ENCODE measurements at regions of chr19 and their contacts with region 1.

Region 1: GRCh38 chr19:40750059-40750873 is at the start of gene ACTMAP:
- DNase-seq: peak; percentile 98 to 100 (median 99)
- ATAC-seq: peak; percentile 88
- H3K4me3 ChIP-seq: peak within 1 kb of the TSS; percentile 93
- H3K4me3 Mint-ChIP-seq: peak within 1 kb of the TSS; percentile 99
- H3K27ac ChIP-seq: peak within 1 kb of the TSS; percentile 84 to 93
- H3K27ac Mint-ChIP-seq: peak within 1 kb of the TSS; percentile 99
- H3K4me1 ChIP-seq: peaks cover 56% of the 10 kb centered on the region
- H3K4me1 Mint-ChIP-seq: peaks cover 47% of the 10 kb centered on the region
- H3K27me3 ChIP-seq: no peaks in the 10 kb centered on the region
- H3K27me3 Mint-ChIP-seq: no peaks in the 10 kb centered on the region
- CTCF ChIP-seq: no peak
- total RNA-seq, gene ACTMAP: 3.9 to 5.7 TPM

Region 2: DNA sequence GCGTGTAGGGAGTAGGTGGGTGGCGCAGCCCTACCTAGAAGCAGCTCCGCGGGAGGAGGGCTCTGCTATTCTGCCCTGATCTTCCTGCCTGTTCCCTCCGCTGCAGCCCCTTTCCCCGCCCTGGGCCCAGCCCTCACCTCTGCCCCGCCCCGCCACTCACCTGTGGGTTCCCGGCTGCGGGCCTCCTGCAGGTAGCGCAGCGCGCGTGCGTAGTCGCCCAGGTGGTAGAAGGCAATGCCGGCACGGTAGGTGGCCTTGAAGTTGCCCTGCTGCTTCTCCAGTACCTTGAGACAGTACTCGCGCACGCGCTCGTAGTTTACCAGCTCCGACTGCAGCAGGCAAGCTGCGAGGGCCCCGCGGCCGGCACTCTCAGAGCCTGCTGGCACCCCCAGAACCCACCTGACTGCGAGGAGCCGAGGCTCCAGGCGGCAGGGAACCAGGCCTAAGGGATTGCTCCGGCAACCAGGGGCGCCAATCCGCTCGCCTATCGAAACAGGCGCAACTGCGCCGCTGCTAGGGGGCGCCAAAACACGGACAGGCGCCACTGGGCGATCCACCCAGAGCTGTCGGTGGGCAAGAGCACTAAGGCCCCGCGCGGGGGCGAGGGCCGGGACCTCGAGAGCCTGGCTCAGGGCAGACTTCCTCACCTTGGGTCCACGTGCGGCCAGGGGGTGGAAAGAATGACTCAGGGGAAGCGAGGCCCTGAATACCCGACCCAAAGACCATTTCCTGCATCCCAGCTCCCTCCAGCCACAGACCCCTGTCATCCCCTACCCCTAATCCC is 533.0 kb before region 1 on chr19:
- CTCF ChIA-PET with region 1: no interaction called
- POLR2A ChIA-PET with region 1: no interaction called
- intact Hi-C with region 1: no loop called
- DNase-seq: no peak
- ATAC-seq: no peak
- H3K4me3 ChIP-seq: no peak overlapping the region
- H3K4me3 Mint-ChIP-seq: no peak overlapping the region
- H3K27ac ChIP-seq: no peak overlapping the region
- H3K27ac Mint-ChIP-seq: no peak overlapping the region
- H3K4me1 ChIP-seq: peaks cover 14% of the 10 kb centered on the region
- H3K4me1 Mint-ChIP-seq: peaks cover 5% of the 10 kb centered on the region
- H3K27me3 ChIP-seq: peaks cover 33 to 38% of the 10 kb centered on the region in 2 experiments
- H3K27me3 Mint-ChIP-seq: peaks cover 52% of the 10 kb centered on the region
- CTCF ChIP-seq: no peak

Region 3: DNA sequence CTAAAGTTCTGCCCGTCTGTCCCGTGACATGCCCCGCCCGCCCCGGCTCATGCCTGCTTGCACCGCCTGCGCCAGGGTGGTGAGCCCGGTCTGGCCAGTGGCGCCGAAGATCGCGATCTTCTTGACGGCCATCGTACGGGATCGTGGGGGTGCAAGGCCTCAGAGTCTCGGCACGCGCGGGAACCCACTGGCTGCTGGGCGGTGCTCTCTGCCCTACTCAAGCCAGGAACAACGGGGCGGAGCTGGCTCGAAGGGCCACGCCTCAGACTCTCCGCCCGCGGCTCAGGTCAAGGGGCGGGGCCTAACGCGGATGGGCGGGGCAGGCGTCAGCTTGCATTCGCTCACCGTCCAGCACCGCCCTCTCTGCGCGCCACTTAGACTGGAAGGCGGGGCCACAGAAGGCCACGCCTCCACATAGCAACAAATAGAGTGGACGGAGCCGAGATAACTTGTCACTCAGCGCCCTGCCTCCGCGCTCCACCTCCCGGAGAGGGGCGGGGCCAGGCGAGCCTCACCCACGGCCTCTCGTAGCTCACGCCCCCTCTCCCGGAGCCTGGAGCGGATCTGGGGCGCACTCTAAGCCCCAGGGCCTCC is 284.6 kb before region 1 on chr19 and contains the start of gene BLVRB:
- CTCF ChIA-PET with region 1: no interaction called
- POLR2A ChIA-PET with region 1: interaction called, 4 read pairs
- intact Hi-C with region 1: loop called in 1 of 2 experiments (anchors 10 kb)
- DNase-seq: peak; percentile 98 to 100 (median 100)
- ATAC-seq: peak; percentile 81
- H3K4me3 ChIP-seq: peak within 1 kb of the TSS; percentile 81
- H3K4me3 Mint-ChIP-seq: peak within 1 kb of the TSS; percentile 93
- H3K27ac ChIP-seq: peak within 1 kb of the TSS; percentile 13 to 62
- H3K27ac Mint-ChIP-seq: peak within 1 kb of the TSS; percentile 87
- H3K4me1 ChIP-seq: peaks cover 35% of the 10 kb centered on the region
- H3K4me1 Mint-ChIP-seq: peaks cover 30% of the 10 kb centered on the region
- H3K27me3 ChIP-seq: peaks cover 0 to 16% of the 10 kb centered on the region in 2 experiments
- H3K27me3 Mint-ChIP-seq: peaks cover 25% of the 10 kb centered on the region
- CTCF ChIP-seq: no peak
- total RNA-seq, gene BLVRB: 4.3 to 5.2 TPM

Region 4: DNA sequence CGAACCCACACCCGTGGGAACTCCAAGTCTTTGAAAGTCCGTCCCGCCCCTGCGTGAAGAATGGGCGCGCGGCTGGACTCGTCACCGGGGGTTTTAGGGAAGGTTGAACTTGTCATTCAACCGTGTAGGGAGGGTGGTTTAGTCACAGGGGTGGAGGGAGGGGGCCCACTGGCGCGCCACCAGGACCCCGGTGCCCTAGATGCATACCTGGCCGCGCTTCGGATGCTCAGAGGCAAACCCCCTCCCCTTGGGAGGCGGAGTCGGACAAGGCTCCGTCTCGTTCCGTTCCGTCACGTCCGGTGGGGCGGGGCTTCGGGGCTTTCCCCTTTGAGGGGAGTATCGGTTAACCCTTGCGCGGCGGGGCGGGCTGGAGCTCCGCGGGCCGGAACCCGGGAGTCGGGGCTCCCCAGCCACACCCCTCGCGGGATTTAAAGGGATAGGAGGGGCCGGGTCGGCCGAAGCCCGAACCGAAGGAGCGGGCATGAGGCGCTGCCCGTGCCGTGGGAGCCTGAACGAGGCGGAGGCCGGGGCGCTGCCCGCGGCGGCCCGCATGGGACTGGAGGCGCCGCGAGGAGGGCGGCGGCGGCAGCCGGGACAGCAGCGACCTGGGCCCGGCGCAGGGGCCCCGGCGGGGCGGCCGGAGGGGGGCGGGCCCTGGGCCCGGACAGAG is 33.5 kb before region 1 on chr19 and contains the starts of genes COQ8B and ITPKC:
- CTCF ChIA-PET with region 1: interaction called, 4 read pairs
- POLR2A ChIA-PET with region 1: interaction called, 22 read pairs
- intact Hi-C with region 1: loop called (anchors 1 to 2 kb)
- DNase-seq: peak; percentile 98 to 100 (median 99)
- ATAC-seq: peak; percentile 73
- H3K4me3 ChIP-seq: peak within 1 kb of the TSS; percentile 89
- H3K4me3 Mint-ChIP-seq: peak within 1 kb of the TSS; percentile 95
- H3K27ac ChIP-seq: peak within 1 kb of the TSS; percentile 89 to 96
- H3K27ac Mint-ChIP-seq: peak within 1 kb of the TSS; percentile 94
- H3K4me1 ChIP-seq: peaks cover 70% of the 10 kb centered on the region
- H3K4me1 Mint-ChIP-seq: peaks cover 70% of the 10 kb centered on the region
- H3K27me3 ChIP-seq: no peaks in the 10 kb centered on the region
- H3K27me3 Mint-ChIP-seq: no peaks in the 10 kb centered on the region
- CTCF ChIP-seq: no peak
- total RNA-seq, gene COQ8B: 16.4 to 18.3 TPM
- total RNA-seq, gene ITPKC: 3.7 to 4.5 TPM

Region 5: GRCh38 chr19:40798223-40798996 is 48.1 kb after region 1 on chr19:
- CTCF ChIA-PET with region 1: interaction called, 7 read pairs
- POLR2A ChIA-PET with region 1: interaction called, 82 read pairs
- intact Hi-C with region 1: loop called (anchors 1 kb)
- DNase-seq: peak; percentile 100
- ATAC-seq: peak; percentile 78
- H3K4me3 ChIP-seq: peak overlapping the region; percentile 64
- H3K4me3 Mint-ChIP-seq: peak overlapping the region; percentile 92
- H3K27ac ChIP-seq: peak overlapping the region; percentile 88 to 96
- H3K27ac Mint-ChIP-seq: peak overlapping the region; percentile 98
- H3K4me1 ChIP-seq: peaks cover 47% of the 10 kb centered on the region
- H3K4me1 Mint-ChIP-seq: peaks cover 45% of the 10 kb centered on the region
- H3K27me3 ChIP-seq: no peaks in the 10 kb centered on the region
- H3K27me3 Mint-ChIP-seq: no peaks in the 10 kb centered on the region
- CTCF ChIP-seq: peak; percentile 40

Region 6: GRCh38 chr19:40813182-40813958 is 63.1 kb after region 1 on chr19:
- CTCF ChIA-PET with region 1: no interaction called
- POLR2A ChIA-PET with region 1: interaction called, 6 read pairs
- intact Hi-C with region 1: loop called in 1 of 2 experiments (anchors 2 kb)
- DNase-seq: no peak
- ATAC-seq: no peak
- H3K4me3 ChIP-seq: no peak overlapping the region
- H3K4me3 Mint-ChIP-seq: peak overlapping the region; percentile 95
- H3K27ac ChIP-seq: no peak overlapping the region
- H3K27ac Mint-ChIP-seq: peak overlapping the region; percentile 90
- H3K4me1 ChIP-seq: peaks cover 49% of the 10 kb centered on the region
- H3K4me1 Mint-ChIP-seq: peaks cover 41% of the 10 kb centered on the region
- H3K27me3 ChIP-seq: no peaks in the 10 kb centered on the region
- H3K27me3 Mint-ChIP-seq: no peaks in the 10 kb centered on the region
- CTCF ChIP-seq: no peak